GM12878 (cell line): ENCODE measurements at regions of chr1 and their contacts with region 1.

Region 1: GRCh38 chr1:167328816-167329483 is 108.3 kb downstream of the POU2F1 start:
- DNase-seq: peak; percentile 84
- ATAC-seq: peak; percentile 77
- H3K4me3 ChIP-seq: peak overlapping the region; percentile 72
- H3K27ac ChIP-seq: peak overlapping the region; percentile 82
- H3K4me1 ChIP-seq: peaks cover 36% of the 10 kb centered on the region
- H3K27me3 ChIP-seq: no peaks in the 10 kb centered on the region
- CTCF ChIP-seq: no peak
- EP300 ChIP-seq: peak; percentile 65 to 83; a peak in 2 of 4 replicates
- POLR2A ChIP-seq: no peak
- RAD21 ChIP-seq: no peak

Region 2: DNA sequence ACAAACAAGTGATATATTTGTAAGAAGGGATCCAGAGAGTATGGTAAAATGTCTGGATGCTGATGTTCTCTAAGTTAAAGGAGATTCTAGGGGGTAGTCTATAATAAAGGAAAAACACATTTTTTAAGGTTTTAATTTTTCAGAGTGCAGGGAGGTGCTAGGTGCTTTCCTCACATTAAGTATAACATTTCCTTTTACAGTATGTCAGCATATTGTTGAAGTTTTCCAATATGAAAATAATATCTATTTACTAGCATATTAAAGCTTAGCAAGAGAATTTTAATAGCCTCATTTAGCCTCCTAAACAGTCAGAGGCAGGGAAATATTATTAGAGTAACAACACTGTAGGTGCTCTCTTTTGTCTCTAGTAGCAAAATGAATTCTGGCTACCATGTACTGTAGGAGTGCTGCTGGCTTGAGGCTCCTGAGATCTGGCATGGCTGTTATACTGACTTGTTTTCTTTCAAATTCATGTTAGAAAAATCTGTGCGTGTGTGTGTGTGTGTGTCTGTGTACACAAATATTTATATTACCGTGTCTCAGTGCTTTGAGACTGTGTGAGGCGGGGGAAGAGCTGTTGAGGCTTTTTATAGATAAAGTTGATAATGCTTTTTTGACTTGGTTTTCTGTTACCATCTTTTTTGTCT is 37.3 kb before region 1 on chr1:
- CTCF ChIA-PET with region 1: interaction called, 3 read pairs
- POLR2A ChIA-PET with region 1: interaction called, 3 read pairs
- RAD21 ChIA-PET with region 1: interaction called, 4 read pairs
- SMC1A ChIA-PET with region 1: interaction called, 14 read pairs
- in situ Hi-C with region 1: no loop called
- intact Hi-C with region 1: no loop called
- DNase-seq: no peak
- ATAC-seq: no peak
- H3K4me3 ChIP-seq: no peak overlapping the region
- H3K27ac ChIP-seq: no peak overlapping the region
- H3K4me1 ChIP-seq: no peaks in the 10 kb centered on the region
- H3K27me3 ChIP-seq: no peaks in the 10 kb centered on the region
- CTCF ChIP-seq: no peak
- EP300 ChIP-seq: no peak
- POLR2A ChIP-seq: no peak
- RAD21 ChIP-seq: no peak

Region 3: DNA sequence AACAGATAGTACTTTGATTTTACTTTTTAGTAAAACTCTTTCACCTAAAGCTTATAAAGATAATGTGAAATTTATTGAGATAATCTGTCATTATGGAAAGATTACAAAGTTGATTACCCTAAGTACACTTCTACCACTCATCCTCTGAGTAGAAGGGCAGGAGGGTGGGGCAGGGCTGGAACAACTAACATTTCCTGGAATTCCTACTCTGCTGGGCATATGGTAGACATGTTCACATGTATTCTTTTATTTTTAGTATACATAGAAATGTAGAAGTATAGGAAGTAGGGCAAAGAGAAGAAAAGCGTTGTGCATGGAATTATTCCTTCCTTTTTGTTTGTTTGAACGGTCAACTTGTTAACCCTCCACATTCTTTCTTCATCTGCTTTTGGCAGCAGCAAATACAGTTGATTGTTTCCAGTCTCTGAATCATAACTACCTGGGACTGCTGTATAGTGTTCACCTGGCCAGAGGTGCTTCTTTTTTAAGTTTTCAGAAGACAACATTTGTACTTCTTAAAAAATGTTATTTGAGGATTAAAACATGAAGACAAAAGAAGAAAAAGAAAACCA is 23.2 kb before region 1 on chr1:
- CTCF ChIA-PET with region 1: no interaction called
- POLR2A ChIA-PET with region 1: interaction called, 5 read pairs
- RAD21 ChIA-PET with region 1: interaction called, 4 read pairs
- SMC1A ChIA-PET with region 1: interaction called, 10 read pairs
- in situ Hi-C with region 1: no loop called
- intact Hi-C with region 1: no loop called
- DNase-seq: no peak
- ATAC-seq: no peak
- H3K4me3 ChIP-seq: no peak overlapping the region
- H3K27ac ChIP-seq: no peak overlapping the region
- H3K4me1 ChIP-seq: no peaks in the 10 kb centered on the region
- H3K27me3 ChIP-seq: no peaks in the 10 kb centered on the region
- CTCF ChIP-seq: no peak
- EP300 ChIP-seq: no peak
- POLR2A ChIP-seq: no peak
- RAD21 ChIP-seq: no peak